Activated CD4-positive, alpha-beta memory T cell treated with anti-CD3 and anti-CD28 coated beads for 36 hours (primary cell): ENCODE measurements at regions of chr11 and their contacts with region 1.

Region 1: GRCh38 chr11:10808553-10809372 is at the start of gene EIF4G2:
- DNase-seq: peak; percentile 99
- H3K4me3 Mint-ChIP-seq: peak within 1 kb of the TSS; percentile 91
- H3K27ac Mint-ChIP-seq: peak within 1 kb of the TSS; percentile 98
- H3K4me1 Mint-ChIP-seq: peaks cover 46% of the 10 kb centered on the region
- H3K27me3 Mint-ChIP-seq: no peaks in the 10 kb centered on the region
- total RNA-seq, gene EIF4G2: 794 to 835 TPM

Region 2: GRCh38 chr11:10526974-10527918 is 281.5 kb before region 1 on chr11:
- CTCF ChIA-PET with region 1: no interaction called
- POLR2A ChIA-PET with region 1: no interaction called
- intact Hi-C with region 1: no loop called
- DNase-seq: no peak
- H3K4me3 Mint-ChIP-seq: no peak overlapping the region
- H3K27ac Mint-ChIP-seq: peak overlapping the region; percentile 42
- H3K4me1 Mint-ChIP-seq: peaks cover 15% of the 10 kb centered on the region
- H3K27me3 Mint-ChIP-seq: no peaks in the 10 kb centered on the region

Region 3: DNA sequence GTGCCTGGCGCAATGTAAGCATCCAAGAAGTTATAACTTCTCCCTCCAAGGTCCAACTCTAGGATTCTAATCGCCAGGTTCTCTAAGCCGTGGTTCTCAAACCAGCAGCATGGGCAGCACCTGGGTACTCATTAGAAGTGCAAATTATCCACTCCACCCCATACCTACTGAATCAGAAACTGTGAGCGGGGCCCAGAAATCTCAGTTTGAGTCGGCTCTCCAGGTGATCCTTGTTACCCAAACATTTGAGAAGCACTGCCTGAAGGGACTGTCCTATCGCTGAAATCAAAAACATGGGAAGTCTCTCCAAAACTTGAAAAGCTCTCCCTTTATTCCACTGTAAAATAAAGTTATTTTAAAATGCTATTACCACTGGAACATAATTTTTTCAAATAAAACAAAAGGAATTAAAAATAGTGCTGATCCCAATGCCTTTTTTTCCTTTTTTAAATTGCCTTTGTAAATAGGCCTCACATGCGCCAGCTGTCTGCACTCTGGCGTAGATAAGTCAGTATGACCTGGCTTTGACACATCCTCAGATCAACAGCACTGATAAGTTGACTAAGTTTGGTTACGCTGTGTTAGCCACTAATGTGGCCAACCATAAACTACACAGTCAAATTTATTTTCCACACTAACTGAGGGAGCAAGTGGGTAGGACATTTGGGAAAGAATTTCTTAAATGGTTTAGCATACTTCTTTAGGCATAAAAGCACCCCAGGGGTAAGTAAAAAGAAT is 66.1 kb before region 1 on chr11:
- CTCF ChIA-PET with region 1: no interaction called
- POLR2A ChIA-PET with region 1: interaction called, 4 read pairs
- intact Hi-C with region 1: loop called (anchors 2 kb)
- DNase-seq: peak; percentile 66
- H3K4me3 Mint-ChIP-seq: peak overlapping the region; percentile 37
- H3K27ac Mint-ChIP-seq: peak overlapping the region; percentile 74
- H3K4me1 Mint-ChIP-seq: peaks cover 39% of the 10 kb centered on the region
- H3K27me3 Mint-ChIP-seq: no peaks in the 10 kb centered on the region

Region 4: DNA sequence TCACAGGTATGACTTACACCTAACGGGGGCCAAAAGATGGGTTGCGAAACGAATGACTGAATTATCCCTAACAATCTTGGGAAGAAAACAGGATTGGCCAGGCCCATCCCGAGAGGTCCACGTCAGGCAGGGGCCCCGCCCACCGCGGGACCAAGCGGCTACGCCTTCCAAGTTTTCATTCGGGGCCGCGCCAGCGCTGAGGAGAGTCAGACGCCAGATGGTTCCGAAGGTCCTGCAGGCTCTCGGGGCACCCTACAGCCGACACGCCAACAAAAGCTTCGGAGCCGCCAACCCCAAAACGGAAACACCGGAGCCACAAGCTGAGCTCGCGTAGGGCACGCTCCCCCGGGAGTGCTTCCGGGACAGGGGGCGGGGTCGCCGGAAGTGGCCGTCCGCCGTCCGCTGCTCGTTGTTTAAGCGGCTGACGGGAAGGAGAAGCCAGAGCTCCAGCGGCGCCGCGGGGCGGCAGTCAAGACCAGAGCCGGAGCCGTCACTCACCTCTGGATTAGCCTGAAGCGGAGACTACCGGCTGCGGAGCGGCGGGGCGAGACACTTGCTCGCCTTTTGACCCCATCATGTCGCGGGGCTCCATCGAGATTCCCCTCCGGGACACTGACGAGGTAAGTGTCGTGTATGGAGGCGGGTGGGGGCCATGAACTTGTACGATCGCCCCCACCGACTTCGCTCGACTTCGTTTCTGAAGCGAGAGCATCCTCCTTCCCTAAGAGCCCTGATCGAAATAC is 57.8 kb before region 1 on chr11 and contains the start of gene CTR9:
- CTCF ChIA-PET with region 1: no interaction called
- POLR2A ChIA-PET with region 1: interaction called, 10 read pairs
- intact Hi-C with region 1: loop called (anchors 1 kb)
- DNase-seq: peak; percentile 96
- H3K4me3 Mint-ChIP-seq: peak within 1 kb of the TSS; percentile 93
- H3K27ac Mint-ChIP-seq: peak within 1 kb of the TSS; percentile 89
- H3K4me1 Mint-ChIP-seq: peaks cover 25% of the 10 kb centered on the region
- H3K27me3 Mint-ChIP-seq: no peaks in the 10 kb centered on the region
- total RNA-seq, gene CTR9: 37.6 to 39.9 TPM

Region 5: GRCh38 chr11:10797531-10797930 is 11.2 kb before region 1 on chr11:
- CTCF ChIA-PET with region 1: interaction called, 50 read pairs
- POLR2A ChIA-PET with region 1: interaction called, 86 read pairs
- intact Hi-C with region 1: no loop called
- DNase-seq: no peak
- H3K4me3 Mint-ChIP-seq: no peak overlapping the region
- H3K27ac Mint-ChIP-seq: no peak overlapping the region
- H3K4me1 Mint-ChIP-seq: peaks cover 62% of the 10 kb centered on the region
- H3K27me3 Mint-ChIP-seq: peaks cover 3% of the 10 kb centered on the region

Region 6: DNA sequence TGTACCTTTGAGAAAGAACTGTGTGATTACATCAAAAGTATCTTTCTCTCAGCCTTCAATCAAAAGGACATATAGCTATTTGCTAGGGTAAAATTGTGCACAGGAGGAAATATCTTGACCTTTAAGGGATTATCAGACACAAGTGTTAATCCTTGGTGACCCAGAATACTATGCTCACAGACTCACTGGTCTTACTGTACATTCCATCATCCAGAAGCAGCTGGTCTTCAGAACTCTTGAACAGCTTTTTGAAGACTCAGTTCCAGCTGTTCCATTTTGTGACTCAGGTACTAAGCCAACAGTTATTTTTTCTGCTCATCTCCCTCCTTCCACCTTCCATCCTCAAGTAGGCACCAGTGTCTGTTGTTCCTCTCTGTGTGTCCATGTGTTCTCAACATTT is 29.3 kb after region 1 on chr11:
- CTCF ChIA-PET with region 1: no interaction called
- POLR2A ChIA-PET with region 1: no interaction called
- intact Hi-C with region 1: no loop called
- DNase-seq: no peak
- H3K4me3 Mint-ChIP-seq: no peak overlapping the region
- H3K27ac Mint-ChIP-seq: no peak overlapping the region
- H3K4me1 Mint-ChIP-seq: no peaks in the 10 kb centered on the region
- H3K27me3 Mint-ChIP-seq: no peaks in the 10 kb centered on the region

Region 7: GRCh38 chr11:10847960-10848870 is 39.5 kb after region 1 on chr11:
- CTCF ChIA-PET with region 1: no interaction called
- POLR2A ChIA-PET with region 1: interaction called, 156 read pairs
- intact Hi-C with region 1: no loop called
- DNase-seq: no peak
- H3K4me3 Mint-ChIP-seq: no peak overlapping the region
- H3K27ac Mint-ChIP-seq: no peak overlapping the region
- H3K4me1 Mint-ChIP-seq: peaks cover 8% of the 10 kb centered on the region
- H3K27me3 Mint-ChIP-seq: no peaks in the 10 kb centered on the region

Region 8: DNA sequence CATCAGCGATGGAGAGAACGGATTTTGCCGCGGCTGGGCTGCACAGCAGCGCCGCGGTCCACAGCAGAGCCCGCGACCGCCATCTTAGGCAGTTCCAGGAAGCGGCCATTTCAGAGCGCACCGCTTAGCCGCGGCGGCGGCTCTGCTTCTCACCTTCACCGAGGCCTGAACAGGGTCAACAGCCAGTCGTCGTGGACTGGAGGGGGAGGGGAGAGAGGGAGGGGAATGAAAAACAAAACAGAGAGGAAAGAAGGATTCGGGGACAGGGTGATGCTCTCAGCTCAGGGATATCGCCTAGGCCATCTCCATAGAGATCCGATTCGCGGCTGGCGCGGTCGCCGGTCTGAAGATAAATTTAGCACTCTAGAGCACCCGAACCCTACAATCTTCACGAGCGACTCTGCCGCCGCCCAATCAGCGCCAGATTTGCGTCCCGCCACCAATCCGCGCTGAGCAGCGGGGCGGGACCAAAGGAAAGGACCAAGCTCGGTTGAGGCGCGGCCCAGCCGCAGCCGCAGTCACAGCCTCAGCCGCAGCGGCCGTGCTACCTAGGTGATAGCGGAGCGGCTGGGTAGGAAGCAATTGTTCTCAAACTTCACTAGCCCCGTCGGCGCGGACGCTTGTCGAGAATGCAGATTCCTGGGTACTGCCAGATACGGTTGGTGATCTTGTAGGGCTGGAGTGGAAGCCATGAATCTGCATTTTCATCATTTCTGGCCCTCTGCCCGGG is 49.1 kb after region 1 on chr11 and contains the start of gene ZBED5:
- CTCF ChIA-PET with region 1: interaction called, 17 read pairs
- POLR2A ChIA-PET with region 1: interaction called, 156 read pairs
- intact Hi-C with region 1: loop called (anchors 1 kb)
- DNase-seq: peak; percentile 98
- H3K4me3 Mint-ChIP-seq: peak within 1 kb of the TSS; percentile 97
- H3K27ac Mint-ChIP-seq: peak within 1 kb of the TSS; percentile 99
- H3K4me1 Mint-ChIP-seq: peaks cover 33% of the 10 kb centered on the region
- H3K27me3 Mint-ChIP-seq: no peaks in the 10 kb centered on the region
- total RNA-seq, gene ZBED5: 39.8 to 43.3 TPM

Region 9: GRCh38 chr11:10878408-10879214 is 69.8 kb after region 1 on chr11:
- CTCF ChIA-PET with region 1: interaction called, 10 read pairs
- POLR2A ChIA-PET with region 1: no interaction called
- intact Hi-C with region 1: no loop called
- DNase-seq: no peak
- H3K4me3 Mint-ChIP-seq: no peak overlapping the region
- H3K27ac Mint-ChIP-seq: no peak overlapping the region
- H3K4me1 Mint-ChIP-seq: peaks cover 11% of the 10 kb centered on the region
- H3K27me3 Mint-ChIP-seq: no peaks in the 10 kb centered on the region